Activated CD4-positive, alpha-beta memory T cell treated with anti-CD3 and anti-CD28 coated beads for 36 hours (primary cell): ENCODE measurements at regions of chr3 and their contacts with region 1.

Region 1: DNA sequence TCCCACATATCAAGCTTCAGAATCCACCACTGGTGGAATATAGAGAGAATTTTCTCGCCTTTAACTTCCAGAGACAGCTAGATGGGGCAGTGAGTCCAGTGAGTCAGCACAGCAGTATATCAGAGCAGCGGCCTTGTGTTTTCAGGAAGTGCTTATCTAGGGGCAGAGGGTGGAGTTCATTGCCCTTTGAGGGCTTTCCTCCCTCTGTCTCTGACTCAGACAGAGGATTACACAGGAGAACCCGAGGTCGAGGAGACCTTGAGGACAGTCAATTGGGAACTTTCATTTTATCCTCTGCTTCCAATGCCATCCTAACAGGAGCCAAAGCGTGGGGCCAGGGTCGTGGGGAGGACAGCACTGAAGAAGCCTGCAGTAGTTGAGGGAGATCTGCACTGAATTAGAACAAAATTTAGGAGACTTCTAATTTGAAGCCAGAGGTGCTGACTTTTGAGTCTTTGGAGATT is 109.6 kb upstream of the UMPS start:
- DNase-seq: peak; percentile 62
- H3K4me3 Mint-ChIP-seq: peak overlapping the region; percentile 6
- H3K27ac Mint-ChIP-seq: peak overlapping the region; percentile 24
- H3K4me1 Mint-ChIP-seq: peaks cover 34% of the 10 kb centered on the region
- H3K27me3 Mint-ChIP-seq: no peaks in the 10 kb centered on the region

Region 2: GRCh38 chr3:124574001-124574400 is 46.6 kb before region 1 on chr3:
- CTCF ChIA-PET with region 1: no interaction called
- POLR2A ChIA-PET with region 1: no interaction called
- intact Hi-C with region 1: no loop called
- DNase-seq: no peak
- H3K4me3 Mint-ChIP-seq: no peak overlapping the region
- H3K27ac Mint-ChIP-seq: no peak overlapping the region
- H3K4me1 Mint-ChIP-seq: no peaks in the 10 kb centered on the region
- H3K27me3 Mint-ChIP-seq: no peaks in the 10 kb centered on the region

Region 3: GRCh38 chr3:124584552-124585391 is 35.9 kb before region 1 on chr3:
- CTCF ChIA-PET with region 1: no interaction called
- POLR2A ChIA-PET with region 1: no interaction called
- intact Hi-C with region 1: loop called (anchors 2 kb)
- DNase-seq: peak; percentile 54
- H3K4me3 Mint-ChIP-seq: peak overlapping the region; percentile 86
- H3K27ac Mint-ChIP-seq: peak overlapping the region; percentile 47
- H3K4me1 Mint-ChIP-seq: peaks cover 46% of the 10 kb centered on the region
- H3K27me3 Mint-ChIP-seq: peaks cover 15% of the 10 kb centered on the region

Region 4: DNA sequence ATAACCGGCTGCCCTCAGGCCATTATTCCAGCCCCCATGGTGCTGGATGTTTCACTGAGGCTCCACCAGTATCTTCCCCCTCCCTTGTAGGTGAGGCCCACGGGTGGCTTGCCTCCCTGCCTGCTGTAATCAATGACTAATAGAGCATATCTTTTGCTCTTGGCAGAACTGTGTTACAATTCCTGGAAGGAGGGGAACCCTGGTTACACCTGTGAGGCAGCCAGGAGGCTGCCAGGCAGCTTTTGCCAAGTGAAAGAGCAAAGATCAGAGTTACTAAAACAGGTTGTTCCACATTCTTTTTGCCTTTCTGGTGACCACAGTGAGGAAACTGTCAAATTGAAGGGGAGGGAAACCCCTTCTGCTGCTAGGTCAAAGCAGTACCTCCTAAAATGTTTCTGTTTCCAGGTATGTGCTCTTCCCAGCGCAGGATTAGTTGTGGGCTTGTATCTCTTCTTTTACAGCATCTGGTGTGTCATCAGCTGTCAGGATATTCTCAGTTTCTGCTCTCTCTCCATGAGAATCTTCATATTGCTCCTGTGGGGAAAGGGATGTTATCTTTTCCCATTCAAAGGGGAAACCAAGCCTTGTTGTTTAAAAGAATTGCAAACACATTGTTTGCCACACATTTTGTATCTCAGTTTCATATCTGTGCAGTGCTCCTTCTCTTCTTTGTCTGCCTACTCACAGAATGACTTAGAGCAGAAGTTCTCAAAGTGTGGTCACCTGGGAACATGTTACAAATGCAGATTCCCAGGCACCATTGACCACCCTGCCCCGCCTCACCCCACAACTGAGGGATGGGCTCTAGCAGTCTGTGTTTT is 27.8 kb before region 1 on chr3:
- CTCF ChIA-PET with region 1: no interaction called
- POLR2A ChIA-PET with region 1: no interaction called
- intact Hi-C with region 1: loop called (anchors 2 kb)
- DNase-seq: peak; percentile 63
- H3K4me3 Mint-ChIP-seq: no peak overlapping the region
- H3K27ac Mint-ChIP-seq: peak overlapping the region; percentile 60
- H3K4me1 Mint-ChIP-seq: peaks cover 32% of the 10 kb centered on the region
- H3K27me3 Mint-ChIP-seq: no peaks in the 10 kb centered on the region

Region 5: DNA sequence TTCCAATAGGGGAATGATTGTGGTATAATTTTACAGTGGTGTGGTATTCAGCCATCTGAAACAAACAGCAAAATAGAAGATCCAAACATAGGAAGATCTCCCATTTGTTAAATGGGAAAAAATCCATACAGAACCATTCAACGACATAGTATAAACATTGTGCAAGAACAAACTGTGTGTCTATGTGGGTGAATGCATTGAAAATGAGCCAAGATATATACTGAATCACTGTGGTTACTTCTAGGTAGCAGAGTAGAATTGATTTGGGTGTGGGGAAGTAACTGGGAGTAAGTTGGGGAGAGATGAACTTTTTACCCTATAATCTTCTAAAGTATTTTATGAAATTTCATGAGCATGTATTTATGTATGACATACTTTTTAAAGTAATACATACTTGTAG is 13.5 kb before region 1 on chr3:
- CTCF ChIA-PET with region 1: no interaction called
- POLR2A ChIA-PET with region 1: no interaction called
- intact Hi-C with region 1: no loop called
- DNase-seq: no peak
- H3K4me3 Mint-ChIP-seq: no peak overlapping the region
- H3K27ac Mint-ChIP-seq: no peak overlapping the region
- H3K4me1 Mint-ChIP-seq: no peaks in the 10 kb centered on the region
- H3K27me3 Mint-ChIP-seq: no peaks in the 10 kb centered on the region